ENCODE measurements at regions of chr9 and their contacts with region 1.

Region 1: DNA sequence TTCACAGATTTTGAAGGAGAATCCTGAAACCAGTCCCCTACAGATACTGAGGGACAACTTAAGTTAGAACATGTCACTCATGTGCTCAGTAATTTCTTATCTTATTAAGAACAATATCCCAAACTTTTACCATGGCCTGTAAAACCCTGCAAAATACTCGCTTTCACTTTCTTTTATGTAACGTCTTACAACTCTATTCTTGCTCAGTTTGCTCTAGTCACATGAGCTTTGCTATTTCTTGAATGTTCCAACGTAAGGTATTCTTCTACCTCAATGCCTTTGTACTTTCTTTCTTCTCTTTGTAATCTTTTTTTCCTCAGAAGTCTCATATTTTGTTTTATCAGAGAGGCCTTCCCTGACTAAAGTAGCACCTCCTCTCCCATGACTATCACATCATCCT is 14.1 kb downstream of the TMEM38B start:
- DNase-seq: no peak
- H3K4me3 ChIP-seq: no peak overlapping the region
- H3K27ac ChIP-seq: no peak overlapping the region
- H3K4me1 ChIP-seq: peaks cover 0 to 12% (median 0%) of the 10 kb centered on the region in 6 donors
- H3K27me3 ChIP-seq: no peaks in the 10 kb centered on the region
- CTCF ChIP-seq: no peak
- POLR2A ChIP-seq: no peak

Region 2: GRCh38 chr9:105593145-105593544 is 115.3 kb before region 1 on chr9:
- intact Hi-C with region 1: loop called (anchors 5 kb)
- DNase-seq: no peak
- H3K4me3 ChIP-seq: no peak overlapping the region
- H3K27ac ChIP-seq: no peak overlapping the region
- H3K4me1 ChIP-seq: no peaks in the 10 kb centered on the region
- H3K27me3 ChIP-seq: no peaks in the 10 kb centered on the region
- CTCF ChIP-seq: no peak
- POLR2A ChIP-seq: no peak

Measured in spleen (tissue), 13 donors.